HEK293 (cell line): ENCODE measurements at regions of chr16 and their contacts with region 1.

Region 1: GRCh38 chr16:48365581-48366164 is 19.5 kb downstream of the SIAH1 start:
- H3K4me3 ChIP-seq: peak overlapping the region; percentile 57
- H3K27ac ChIP-seq: peak overlapping the region; percentile 68
- H3K4me1 ChIP-seq: peaks cover 19% of the 10 kb centered on the region
- CTCF ChIP-seq: peak; percentile 78

Region 2: DNA sequence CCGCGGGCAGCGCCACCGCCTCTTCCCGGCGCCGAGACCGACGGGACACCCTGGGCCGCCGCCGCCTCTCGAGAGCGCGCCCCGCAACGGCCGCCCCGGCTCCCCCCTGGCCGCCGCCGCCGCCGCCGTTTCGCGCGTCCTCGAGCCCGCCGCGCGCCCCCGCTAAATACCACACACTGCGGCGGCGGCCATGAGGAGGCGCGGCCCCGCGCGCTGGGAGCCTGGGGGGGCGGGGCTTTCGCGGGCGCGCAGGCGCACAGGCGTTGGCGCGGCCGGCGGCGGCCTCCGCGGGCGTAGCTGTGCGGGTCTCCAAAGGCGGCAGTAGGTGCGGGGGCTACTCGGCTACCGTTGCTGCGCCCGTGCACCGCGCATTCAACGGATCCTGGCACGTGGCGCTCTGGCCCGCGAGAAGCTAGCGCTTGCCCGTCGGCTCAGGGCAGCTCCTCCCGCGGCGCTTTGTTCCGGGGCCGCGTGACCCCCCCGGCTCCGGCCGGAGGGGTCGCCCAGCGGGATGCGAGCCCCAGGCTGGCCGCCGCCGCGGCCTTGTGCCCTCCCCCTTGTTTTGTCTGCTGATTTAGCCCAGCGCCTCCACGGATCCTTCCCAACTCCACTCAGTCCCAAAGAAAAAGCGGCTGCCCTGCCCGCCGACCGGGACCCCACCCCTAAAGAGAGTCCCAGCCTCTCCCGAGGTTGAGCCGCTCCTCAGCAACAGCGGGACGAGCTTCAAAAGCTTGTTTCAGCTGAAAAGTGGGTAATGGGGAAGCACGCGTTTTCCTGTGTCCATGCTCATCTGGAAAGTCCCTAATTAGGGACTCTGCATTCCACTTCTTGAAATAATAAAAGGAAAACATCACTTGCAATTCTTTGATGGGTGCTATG is 19.8 kb after region 1 on chr16 and contains the start of gene SIAH1:
- CTCF ChIA-PET with region 1: interaction called, 4 read pairs
- POLR2A ChIA-PET with region 1: interaction called, 31 read pairs
- H3K4me3 ChIP-seq: peak within 1 kb of the TSS; percentile 84
- H3K27ac ChIP-seq: peak within 1 kb of the TSS; percentile 98
- H3K4me1 ChIP-seq: peaks cover 5% of the 10 kb centered on the region; the same call in 1 of the 2 replicates
- CTCF ChIP-seq: peak; percentile 41; the same call in 1 of the 2 replicates